ENCODE measurements at regions of chr19 and their contacts with region 1.

Region 1: GRCh38 chr19:44723952-44724319 is 24.6 kb upstream of the BCL3 start:
- DNase-seq: peak; percentile 53
- H3K4me3 ChIP-seq: no peak overlapping the region
- H3K27ac ChIP-seq: no peak overlapping the region
- H3K27me3 ChIP-seq: no peaks in the 10 kb centered on the region
- CTCF ChIP-seq: peak; percentile 97

Region 2: DNA sequence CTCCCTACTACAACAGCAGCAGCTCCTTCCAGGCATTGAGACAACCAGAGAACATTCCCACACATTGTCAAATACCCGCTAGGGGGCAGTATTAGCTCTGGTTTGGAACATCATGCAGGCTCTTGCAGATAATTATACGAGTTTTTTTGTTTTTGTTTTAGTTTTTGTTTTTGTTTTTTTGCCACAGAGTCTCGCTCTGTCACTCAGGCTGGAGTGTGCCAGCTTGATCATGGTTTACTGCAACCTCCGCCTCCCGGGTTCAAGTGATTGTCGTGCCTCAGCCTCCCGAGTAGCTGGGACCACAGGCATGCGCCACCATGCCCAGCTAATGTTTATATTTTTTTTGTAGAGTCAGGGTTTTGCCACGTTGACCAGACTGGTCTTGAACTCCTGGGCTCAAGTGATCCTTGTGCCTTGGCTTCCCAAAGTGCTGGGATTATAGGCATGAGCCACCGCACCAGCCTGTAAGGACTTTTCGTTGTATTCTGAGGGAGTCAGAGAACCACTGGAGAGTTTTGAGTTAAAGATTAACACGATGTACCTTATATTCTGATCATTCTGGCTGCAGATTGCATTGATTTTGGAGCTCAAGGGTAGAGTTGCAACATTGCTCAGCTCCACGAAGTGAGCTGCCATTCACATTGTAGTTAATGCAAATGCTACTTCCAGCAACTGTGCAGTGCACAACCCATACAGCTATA is 152.8 kb before region 1 on chr19:
- CTCF ChIA-PET with region 1: interaction called, 17 read pairs
- POLR2A ChIA-PET with region 1: no interaction called
- DNase-seq: peak; percentile 67
- H3K4me3 ChIP-seq: no peak overlapping the region
- H3K27ac ChIP-seq: no peak overlapping the region
- H3K27me3 ChIP-seq: peaks cover 10% of the 10 kb centered on the region
- CTCF ChIP-seq: peak; percentile 76

Region 3: GRCh38 chr19:44712864-44713515 is 10.9 kb before region 1 on chr19:
- CTCF ChIA-PET with region 1: interaction called, 15 read pairs
- POLR2A ChIA-PET with region 1: no interaction called
- DNase-seq: no peak
- H3K4me3 ChIP-seq: no peak overlapping the region
- H3K27ac ChIP-seq: no peak overlapping the region
- H3K27me3 ChIP-seq: no peaks in the 10 kb centered on the region
- CTCF ChIP-seq: no peak

Region 4: DNA sequence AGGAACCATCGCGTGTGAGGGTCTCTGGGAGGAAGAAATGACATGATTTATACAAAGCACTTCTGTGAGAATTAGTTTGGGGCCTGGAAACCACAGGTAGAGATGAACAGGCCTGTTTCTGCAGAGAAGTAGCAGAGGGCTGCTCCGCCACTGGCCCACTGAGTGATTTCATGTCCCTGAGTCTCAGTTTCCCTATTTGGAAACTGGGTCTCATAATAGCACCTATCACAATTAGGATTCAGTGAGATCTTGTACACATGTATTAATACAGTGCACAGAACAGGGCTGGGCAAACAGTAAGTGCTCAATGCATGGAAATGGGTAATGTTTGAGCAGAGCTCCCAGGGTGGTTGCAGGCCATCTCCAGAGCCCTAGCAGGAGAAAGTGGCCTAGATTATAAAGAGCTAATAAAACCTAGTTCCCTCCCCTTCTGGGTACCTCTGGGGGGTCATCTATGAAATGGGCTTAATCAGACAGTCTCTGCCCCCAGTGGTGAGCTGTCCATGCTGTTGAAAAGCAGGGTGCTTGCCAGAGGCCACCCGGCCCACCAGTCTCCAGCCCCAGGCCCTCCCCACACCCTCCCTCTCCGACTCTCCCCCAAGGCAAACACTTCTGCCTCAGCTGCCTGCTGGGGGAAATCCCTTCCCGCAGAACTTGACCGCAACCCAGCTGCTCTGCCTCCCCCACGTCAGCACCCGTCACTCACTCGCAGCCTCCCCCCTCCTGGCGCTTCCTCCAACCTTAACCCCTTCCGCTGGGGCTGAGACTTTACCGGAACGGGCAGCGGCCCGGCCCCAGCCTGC is 29.1 kb after region 1 on chr19:
- CTCF ChIA-PET with region 1: interaction called, 13 read pairs
- POLR2A ChIA-PET with region 1: interaction called, 5 read pairs
- DNase-seq: peak; percentile 96
- H3K4me3 ChIP-seq: peak overlapping the region; percentile 59
- H3K27ac ChIP-seq: peak overlapping the region; percentile 84
- H3K27me3 ChIP-seq: no peaks in the 10 kb centered on the region
- CTCF ChIP-seq: no peak; the same call in 1 of the 2 replicates

Region 5: GRCh38 chr19:44770550-44771257 is 46.8 kb after region 1 on chr19:
- CTCF ChIA-PET with region 1: interaction called, 294 read pairs
- POLR2A ChIA-PET with region 1: interaction called, 9 read pairs
- DNase-seq: peak; percentile 84
- H3K4me3 ChIP-seq: no peak overlapping the region
- H3K27ac ChIP-seq: no peak overlapping the region
- H3K27me3 ChIP-seq: no peaks in the 10 kb centered on the region
- CTCF ChIP-seq: peak; percentile 73

Region 6: DNA sequence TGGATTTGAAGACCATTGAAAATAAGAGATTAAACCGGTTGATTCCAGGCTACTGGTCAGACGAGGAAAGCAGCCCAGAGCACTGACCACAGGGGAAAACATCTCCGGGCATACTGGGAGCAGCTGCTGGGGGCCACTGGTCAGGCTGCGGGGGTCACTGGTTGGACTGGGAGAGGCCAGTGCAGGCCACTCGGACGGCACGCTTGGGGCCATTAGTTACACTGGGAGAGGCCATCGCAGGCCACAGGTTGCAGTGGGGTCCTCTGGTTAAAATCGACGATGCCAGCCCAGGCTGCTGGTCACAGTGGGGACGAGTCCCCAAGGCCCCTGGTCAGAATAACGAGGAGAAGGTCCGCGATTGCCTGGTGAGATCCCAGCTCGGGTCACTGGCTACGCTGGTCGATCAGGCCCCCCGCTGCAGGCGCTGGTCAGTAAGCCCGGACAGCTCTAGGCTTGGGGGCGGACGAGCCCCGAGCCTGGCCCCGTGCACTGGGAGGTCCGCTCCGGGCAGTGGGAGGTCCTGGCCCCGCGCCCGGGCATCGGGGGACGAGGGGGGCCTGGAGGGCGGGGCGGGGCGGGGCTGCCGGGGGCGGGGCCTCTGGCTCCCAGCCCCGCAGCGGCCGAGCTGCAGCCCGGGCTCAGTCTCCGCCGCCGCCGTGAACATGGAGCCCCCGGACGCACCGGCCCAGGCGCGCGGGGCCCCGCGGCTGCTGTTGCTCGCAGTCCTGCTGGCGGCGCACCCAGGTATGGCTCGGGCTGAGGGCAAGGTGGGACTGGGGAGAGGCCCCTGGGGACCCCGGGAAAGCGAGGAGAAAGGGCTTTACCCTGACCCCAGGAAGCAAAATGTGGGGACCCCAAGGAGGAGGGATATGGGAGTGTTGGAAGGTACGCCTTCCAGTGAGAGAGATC is 84.8 kb after region 1 on chr19 and contains the start of gene BCAM:
- CTCF ChIA-PET with region 1: interaction called, 20 read pairs
- POLR2A ChIA-PET with region 1: no interaction called
- DNase-seq: no peak
- H3K4me3 ChIP-seq: peak within 1 kb of the TSS; percentile 71
- H3K27ac ChIP-seq: peak within 1 kb of the TSS; percentile 31
- H3K27me3 ChIP-seq: peaks cover 3% of the 10 kb centered on the region
- CTCF ChIP-seq: no peak
- polyA plus RNA-seq, gene BCAM: 8.4 and 9.7 TPM in 2 replicates

Region 7: GRCh38 chr19:44954824-44955586 is 231.1 kb after region 1 on chr19 and contains the start of gene CLPTM1:
- CTCF ChIA-PET with region 1: interaction called, 11 read pairs
- POLR2A ChIA-PET with region 1: no interaction called
- DNase-seq: peak; percentile 95
- H3K4me3 ChIP-seq: peak within 1 kb of the TSS; percentile 97
- H3K27ac ChIP-seq: peak within 1 kb of the TSS; percentile 95
- H3K27me3 ChIP-seq: no peaks in the 10 kb centered on the region
- CTCF ChIP-seq: no peak
- polyA plus RNA-seq, gene CLPTM1: 51.5 and 63.1 TPM in 2 replicates